ENCODE measurements at regions of chr17 and their contacts with region 1.

Region 1: DNA sequence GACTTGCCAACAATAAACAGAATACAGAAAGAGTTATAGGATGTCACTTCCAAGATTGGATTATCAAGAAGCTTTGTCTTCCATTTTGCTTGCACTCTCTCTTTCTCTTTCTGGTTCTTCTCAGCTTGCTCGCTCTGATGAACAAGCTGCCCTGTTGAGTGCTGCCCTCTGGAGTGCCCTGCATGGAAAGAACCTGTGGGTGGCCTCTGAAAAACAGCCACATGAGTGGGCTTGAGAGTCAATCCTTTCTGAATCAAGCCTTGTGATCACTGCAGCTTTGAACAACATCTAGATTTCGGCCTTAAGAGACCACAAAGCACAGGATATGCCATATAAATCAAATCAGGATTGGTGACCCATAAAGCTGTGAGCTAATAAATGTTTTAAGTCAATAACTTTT is 185.1 kb downstream of the KIF2B start:
- DNase-seq: no peak

Region 2: DNA sequence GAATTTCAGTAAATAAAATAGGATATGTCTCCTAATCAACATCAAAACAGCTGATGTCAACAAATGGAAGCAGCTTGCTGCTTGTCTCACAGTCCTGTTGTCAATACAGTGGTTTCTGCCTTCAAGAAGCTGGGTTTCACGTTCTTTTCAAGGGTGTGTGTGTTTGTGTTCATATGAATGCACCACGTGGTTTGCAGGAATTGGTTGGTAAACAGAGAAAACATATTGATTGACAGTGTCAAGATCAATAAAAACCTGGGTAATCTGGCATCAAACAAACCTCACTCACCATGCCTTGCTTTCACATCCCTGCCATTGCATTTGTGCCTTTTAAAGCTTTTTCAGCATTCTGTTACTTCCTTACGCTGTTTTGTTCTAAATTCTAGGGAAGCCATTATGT is 1263.7 kb before region 1 on chr17:
- intact Hi-C with region 1: loop called in 1 of 2 experiments (anchors 5 kb)
- DNase-seq: no peak

Measured in posterior vena cava (tissue), 2 donors.